Mammary epithelial cell (primary cell): ENCODE measurements at regions of chr19 and their contacts with region 1.

Region 1: DNA sequence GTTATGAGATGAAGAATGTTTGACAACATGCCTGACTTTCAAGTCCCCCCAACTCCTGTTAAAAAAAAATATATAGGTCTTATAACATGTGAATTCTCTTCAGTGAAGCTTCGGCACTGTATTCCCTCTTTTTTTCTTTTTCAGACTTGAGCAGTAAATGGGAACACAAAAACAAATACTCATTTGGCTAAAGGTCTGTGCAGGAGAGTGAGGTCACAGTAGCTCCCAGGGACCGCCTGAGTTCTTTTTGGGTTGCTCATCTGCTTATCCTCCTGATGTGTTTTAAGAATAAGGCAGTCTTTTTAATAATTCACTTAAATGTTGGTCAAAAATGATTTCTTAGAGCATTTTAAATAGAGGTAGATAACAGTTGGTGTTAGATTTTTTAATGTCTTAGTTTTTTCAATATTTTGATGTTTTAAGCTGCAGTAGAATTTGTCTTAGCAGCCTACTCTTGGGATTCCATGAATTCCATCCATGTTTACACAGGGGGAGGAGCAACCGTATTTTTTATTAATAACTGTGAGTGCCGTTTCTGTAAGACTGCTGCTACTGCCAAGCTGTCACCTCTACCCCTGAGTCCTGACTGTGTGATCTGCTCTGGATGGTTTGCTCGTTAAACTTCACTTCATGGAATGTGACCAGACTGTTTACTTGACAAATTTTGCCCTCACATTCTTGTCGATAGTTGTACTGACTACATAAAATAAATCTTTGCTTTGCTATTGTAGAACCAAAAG is 14.9 kb downstream of the HNRNPM start:
- DNase-seq: no peak
- H3K4me3 ChIP-seq: no peak overlapping the region
- H3K27ac ChIP-seq: no peak overlapping the region
- H3K4me1 ChIP-seq: peaks cover 16% of the 10 kb centered on the region
- H3K27me3 ChIP-seq: no peaks in the 10 kb centered on the region
- CTCF ChIP-seq: no peak

Region 2: DNA sequence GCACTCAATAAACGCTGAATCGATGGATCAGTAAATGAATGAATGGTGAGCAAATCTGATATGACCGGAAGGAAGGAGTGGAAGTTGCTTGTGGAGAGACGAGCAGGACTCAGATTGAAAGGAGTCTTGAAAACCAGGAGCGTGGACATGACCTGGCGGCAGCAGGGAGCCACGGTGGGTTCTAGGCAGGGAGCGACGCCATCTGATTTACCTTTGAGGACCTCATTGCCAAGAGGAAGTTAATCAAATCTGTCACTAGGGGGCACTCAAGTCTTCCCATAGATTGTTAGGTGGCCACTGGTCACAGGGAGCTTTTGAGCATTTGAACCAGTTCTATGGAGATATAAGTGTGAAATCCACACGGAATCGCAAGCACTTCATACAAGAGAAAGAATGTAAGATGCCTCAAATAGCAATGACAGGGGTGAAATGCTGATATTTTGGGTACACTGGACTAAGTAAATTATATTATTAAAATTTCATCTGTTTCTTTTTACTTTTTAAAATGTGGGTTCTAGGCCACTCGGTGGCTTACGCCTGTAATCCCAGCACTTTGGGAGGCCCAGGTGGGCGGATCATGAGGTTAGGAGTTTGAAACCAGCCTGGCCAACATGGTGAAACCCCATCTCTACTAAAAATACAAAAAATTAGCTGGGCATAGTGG is 301.1 kb before region 1 on chr19:
- CTCF ChIA-PET with region 1: no interaction called
- dilution Hi-C with region 1: no loop called
- in situ Hi-C with region 1: no loop called
- intact Hi-C with region 1: no loop called
- DNase-seq: peak; percentile 76
- H3K4me3 ChIP-seq: no peak overlapping the region
- H3K27ac ChIP-seq: no peak overlapping the region
- H3K4me1 ChIP-seq: peaks cover 9% of the 10 kb centered on the region
- H3K27me3 ChIP-seq: no peaks in the 10 kb centered on the region
- CTCF ChIP-seq: peak; percentile 73 to 78

Region 3: GRCh38 chr19:8373867-8374813 is 85.5 kb before region 1 on chr19:
- CTCF ChIA-PET with region 1: no interaction called
- dilution Hi-C with region 1: loop called (anchors 5 kb)
- in situ Hi-C with region 1: no loop called
- intact Hi-C with region 1: no loop called
- DNase-seq: no peak
- H3K4me3 ChIP-seq: no peak overlapping the region
- H3K27ac ChIP-seq: no peak overlapping the region
- H3K4me1 ChIP-seq: no peaks in the 10 kb centered on the region
- H3K27me3 ChIP-seq: no peaks in the 10 kb centered on the region
- CTCF ChIP-seq: no peak

Region 4: GRCh38 chr19:8552810-8553209 is 93.1 kb after region 1 on chr19:
- CTCF ChIA-PET with region 1: no interaction called
- dilution Hi-C with region 1: no loop called
- in situ Hi-C with region 1: no loop called
- intact Hi-C with region 1: no loop called
- DNase-seq: peak; percentile 41
- H3K4me3 ChIP-seq: no peak overlapping the region
- H3K27ac ChIP-seq: no peak overlapping the region
- H3K4me1 ChIP-seq: no peaks in the 10 kb centered on the region
- H3K27me3 ChIP-seq: no peaks in the 10 kb centered on the region
- CTCF ChIP-seq: no peak

Region 5: DNA sequence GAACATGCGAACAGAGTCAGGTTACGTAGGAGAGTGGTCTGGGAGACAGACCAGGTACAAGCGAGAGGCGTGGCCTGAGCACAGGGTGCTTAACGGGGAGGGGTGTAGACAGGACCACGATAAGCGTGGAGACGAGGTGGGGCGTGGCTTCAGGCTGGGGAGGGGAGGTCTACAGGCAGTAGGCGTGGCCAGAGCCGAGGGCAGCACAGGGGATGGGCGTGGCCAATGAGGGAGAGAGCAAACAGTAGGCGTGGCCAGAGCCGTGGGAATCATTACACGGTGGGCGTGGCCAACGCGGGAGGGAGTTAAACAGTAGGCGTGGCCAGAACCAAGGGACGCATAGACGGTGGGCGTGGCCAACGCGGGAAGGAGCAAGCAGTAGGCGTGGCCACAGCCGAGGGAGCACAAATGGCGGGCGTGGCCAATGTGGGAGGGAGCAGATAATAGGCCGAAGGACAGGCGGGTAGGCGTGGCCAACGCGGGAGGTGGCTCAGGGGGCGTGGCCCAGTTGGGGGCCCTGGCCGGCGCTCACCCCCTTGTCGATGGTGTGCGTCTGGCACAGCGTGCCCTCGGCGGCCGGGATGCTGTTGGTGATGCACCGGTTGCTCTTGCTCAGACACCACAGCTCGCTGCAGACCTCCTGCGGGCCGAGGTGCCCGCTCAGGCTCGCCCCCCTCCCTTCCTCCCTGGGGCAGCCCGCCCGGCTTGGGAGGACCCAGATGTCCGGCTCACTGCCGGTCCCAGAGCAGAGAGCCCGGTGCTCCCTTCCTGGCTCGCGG is 132.7 kb after region 1 on chr19:
- CTCF ChIA-PET with region 1: no interaction called
- dilution Hi-C with region 1: no loop called
- in situ Hi-C with region 1: no loop called
- intact Hi-C with region 1: no loop called
- DNase-seq: peak; percentile 25
- H3K4me3 ChIP-seq: no peak overlapping the region
- H3K27ac ChIP-seq: no peak overlapping the region
- H3K4me1 ChIP-seq: no peaks in the 10 kb centered on the region
- H3K27me3 ChIP-seq: no peaks in the 10 kb centered on the region
- CTCF ChIP-seq: no peak